ENCODE measurements at regions of chr16 and their contacts with region 1.

Region 1: DNA sequence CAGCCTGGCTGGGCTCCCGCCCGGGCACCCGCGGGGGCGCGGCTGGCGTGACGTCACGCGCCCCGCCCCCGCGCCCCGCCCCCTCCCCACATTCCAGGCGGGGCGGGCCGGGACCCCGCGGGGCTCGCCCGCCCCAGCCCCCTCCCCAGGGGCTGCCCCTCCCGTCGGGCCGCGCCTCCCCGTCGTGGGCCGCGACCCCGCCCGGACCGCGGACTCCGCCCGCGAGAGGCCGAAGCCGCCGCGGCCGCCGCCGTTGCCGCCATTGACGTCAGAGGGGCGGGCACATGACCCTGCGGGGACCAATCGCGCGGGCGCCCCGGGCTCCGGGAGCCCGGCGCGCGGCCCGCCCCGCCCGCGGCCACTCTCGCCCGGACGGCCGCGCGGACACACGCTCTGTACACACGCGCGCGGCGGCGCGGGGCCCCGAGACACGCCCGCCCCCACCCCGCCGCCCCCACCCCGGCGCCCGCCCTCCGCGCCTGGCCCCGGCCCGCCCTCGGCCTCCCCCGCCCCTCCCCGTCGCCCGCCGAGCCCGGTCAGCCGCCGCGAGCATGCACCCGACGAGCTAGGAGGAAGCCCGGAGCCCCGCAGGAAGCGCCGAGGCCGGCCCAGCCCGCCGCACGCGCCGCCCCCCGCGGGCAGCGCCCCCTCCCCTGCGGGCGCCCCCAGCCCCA is at the start of gene CMIP:
- DNase-seq: peak; percentile 67
- H3K4me3 Mint-ChIP-seq: peak within 1 kb of the TSS; percentile 99
- H3K27ac Mint-ChIP-seq: peak within 1 kb of the TSS; percentile 93
- H3K4me1 Mint-ChIP-seq: peaks cover 23% of the 10 kb centered on the region
- H3K27me3 Mint-ChIP-seq: no peaks in the 10 kb centered on the region
- CTCF ChIP-seq: no peak
- total RNA-seq, gene CMIP: 44.3 and 53.6 TPM in 2 replicates

Region 2: DNA sequence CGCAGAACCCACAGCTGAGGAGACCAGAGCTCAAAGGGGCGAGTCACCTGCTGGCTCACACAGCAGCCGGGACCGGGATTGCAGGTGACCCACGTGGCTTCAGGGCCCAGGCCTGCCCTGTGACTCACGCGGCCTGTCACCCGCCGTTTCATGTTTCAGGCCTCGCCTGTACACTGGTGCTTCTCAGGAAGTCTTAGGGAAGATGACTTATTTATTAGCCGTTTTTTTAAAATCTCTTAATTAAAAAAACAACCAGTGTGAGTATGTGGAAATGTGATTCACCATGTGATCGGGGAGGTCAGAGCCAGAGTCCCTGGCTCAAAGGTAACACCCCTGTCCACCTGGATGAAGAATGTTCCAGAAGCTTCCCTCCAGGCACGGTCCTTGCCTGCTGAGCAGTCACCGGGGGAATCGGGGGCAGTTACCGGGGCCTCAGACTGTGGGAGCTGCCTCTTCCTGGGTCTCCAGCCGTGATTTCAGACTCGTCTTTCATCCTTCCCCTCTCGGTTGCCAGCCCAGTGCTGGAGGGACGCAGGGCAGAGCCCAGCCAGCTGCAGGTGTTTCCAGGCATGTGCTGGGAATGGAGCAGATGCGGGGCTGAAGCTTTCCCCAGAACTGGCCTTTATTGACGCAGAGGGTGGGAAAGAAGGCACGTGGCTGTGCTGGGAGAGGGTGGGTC is 49.3 kb after region 1 on chr16:
- CTCF ChIA-PET with region 1: interaction called, 5 read pairs
- POLR2A ChIA-PET with region 1: interaction called, 20 read pairs
- intact Hi-C with region 1: loop called (anchors 2 kb)
- DNase-seq: peak; percentile 89
- H3K4me3 Mint-ChIP-seq: peak overlapping the region; percentile 14
- H3K27ac Mint-ChIP-seq: peak overlapping the region; percentile 89
- H3K4me1 Mint-ChIP-seq: peaks cover 43% of the 10 kb centered on the region
- H3K27me3 Mint-ChIP-seq: no peaks in the 10 kb centered on the region
- CTCF ChIP-seq: no peak

Region 3: GRCh38 chr16:81521151-81521626 is 76.6 kb after region 1 on chr16:
- CTCF ChIA-PET with region 1: no interaction called
- POLR2A ChIA-PET with region 1: interaction called, 60 read pairs
- intact Hi-C with region 1: loop called (anchors 2 kb)
- DNase-seq: no peak
- H3K4me3 Mint-ChIP-seq: no peak overlapping the region
- H3K27ac Mint-ChIP-seq: peak overlapping the region; percentile 57
- H3K4me1 Mint-ChIP-seq: peaks cover 33% of the 10 kb centered on the region
- H3K27me3 Mint-ChIP-seq: no peaks in the 10 kb centered on the region
- CTCF ChIP-seq: no peak

Region 4: DNA sequence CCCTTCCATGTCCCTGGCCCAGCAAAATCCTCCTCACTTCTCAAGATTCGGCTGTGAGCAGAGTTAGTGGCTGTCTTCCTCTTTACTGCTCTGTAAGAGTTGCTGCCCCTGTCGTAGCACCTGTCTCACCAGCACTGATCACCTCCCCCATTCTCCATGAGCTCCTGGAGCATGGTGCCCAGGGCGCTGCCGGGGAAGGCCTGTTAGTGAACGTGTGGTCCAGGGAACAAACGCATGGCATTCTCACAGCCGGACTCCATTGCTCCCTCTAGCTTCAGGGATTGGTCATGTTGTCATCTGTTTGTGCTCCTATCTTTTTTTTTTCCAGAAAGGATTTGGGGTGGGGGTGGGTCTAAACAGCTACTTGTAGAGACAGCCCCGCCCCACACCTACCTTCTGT is 141.2 kb after region 1 on chr16:
- CTCF ChIA-PET with region 1: no interaction called
- POLR2A ChIA-PET with region 1: interaction called, 7 read pairs
- intact Hi-C with region 1: loop called (anchors 1 kb)
- DNase-seq: peak; percentile 39
- H3K4me3 Mint-ChIP-seq: no peak overlapping the region
- H3K27ac Mint-ChIP-seq: peak overlapping the region; percentile 77
- H3K4me1 Mint-ChIP-seq: peaks cover 56% of the 10 kb centered on the region
- H3K27me3 Mint-ChIP-seq: no peaks in the 10 kb centered on the region
- CTCF ChIP-seq: no peak

Region 5: DNA sequence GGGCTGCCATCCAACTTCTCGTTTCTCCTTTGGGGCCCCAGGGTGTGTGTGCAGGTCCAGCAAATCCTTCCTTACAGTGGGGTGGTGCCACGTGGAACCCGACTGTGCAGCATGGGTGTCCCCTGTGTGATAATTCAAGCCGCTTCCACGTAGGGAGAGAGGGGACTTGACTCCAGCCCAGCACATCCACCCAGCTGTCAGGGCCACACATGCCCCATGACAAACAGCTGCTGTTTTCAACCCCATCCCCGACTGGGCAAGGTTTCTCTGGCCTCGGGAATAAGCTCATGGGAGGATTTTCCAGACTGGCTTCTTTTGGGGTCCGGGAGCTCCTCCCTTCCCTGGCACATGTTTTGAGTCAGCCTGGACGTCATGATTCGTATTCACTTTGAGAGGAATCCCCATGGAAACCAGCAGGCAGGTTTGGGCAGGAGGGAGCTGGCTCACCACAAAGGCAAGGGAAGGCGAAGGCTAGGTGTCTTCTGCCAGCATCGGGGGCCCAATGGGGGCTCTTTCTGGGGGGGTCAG is 156.4 kb after region 1 on chr16:
- CTCF ChIA-PET with region 1: no interaction called
- POLR2A ChIA-PET with region 1: interaction called, 9 read pairs
- intact Hi-C with region 1: loop called (anchors 5 kb)
- DNase-seq: peak; percentile 86
- H3K4me3 Mint-ChIP-seq: no peak overlapping the region
- H3K27ac Mint-ChIP-seq: peak overlapping the region; percentile 88
- H3K4me1 Mint-ChIP-seq: peaks cover 58% of the 10 kb centered on the region
- H3K27me3 Mint-ChIP-seq: no peaks in the 10 kb centered on the region
- CTCF ChIP-seq: no peak

Region 6: DNA sequence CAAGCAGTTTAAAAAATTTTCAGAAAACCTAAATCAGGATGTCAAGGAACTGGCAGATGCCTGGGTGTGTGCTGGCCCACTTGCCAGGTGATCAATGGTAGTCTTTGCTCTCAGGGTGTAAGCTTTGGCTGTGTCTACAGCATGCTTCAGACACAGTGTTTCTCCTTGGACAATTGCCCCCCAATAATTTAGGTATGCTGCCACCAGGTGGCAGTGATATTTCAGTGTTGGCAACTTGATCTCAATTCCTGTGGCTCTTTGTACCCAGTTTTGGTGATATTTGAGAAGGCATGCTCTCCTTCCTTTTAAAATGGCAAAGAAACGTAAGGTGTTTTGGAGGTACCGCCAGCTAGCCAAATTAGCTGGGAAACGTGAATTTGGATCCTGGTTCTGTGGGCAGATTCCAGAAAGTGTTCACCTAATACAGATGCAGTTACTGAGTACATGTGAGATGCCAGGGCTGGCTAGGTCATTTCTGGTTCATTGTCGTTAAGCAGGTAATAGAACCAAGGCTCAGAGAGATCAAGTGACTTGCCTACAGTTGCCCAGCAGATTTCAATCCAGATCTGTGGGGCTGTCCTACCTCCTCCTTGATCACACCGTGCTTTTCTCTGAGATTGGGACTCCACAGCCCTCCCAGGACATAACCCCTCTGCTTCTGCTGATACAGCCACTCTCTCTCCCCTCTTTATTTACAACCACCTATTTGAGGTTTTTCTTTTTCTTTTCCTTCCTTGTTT is 178.9 kb after region 1 on chr16:
- CTCF ChIA-PET with region 1: interaction called, 3 read pairs
- POLR2A ChIA-PET with region 1: interaction called, 11 read pairs
- intact Hi-C with region 1: no loop called
- DNase-seq: peak; percentile 73
- H3K4me3 Mint-ChIP-seq: no peak overlapping the region
- H3K27ac Mint-ChIP-seq: no peak overlapping the region
- H3K4me1 Mint-ChIP-seq: peaks cover 9% of the 10 kb centered on the region
- H3K27me3 Mint-ChIP-seq: no peaks in the 10 kb centered on the region
- CTCF ChIP-seq: peak; percentile 64

Region 7: DNA sequence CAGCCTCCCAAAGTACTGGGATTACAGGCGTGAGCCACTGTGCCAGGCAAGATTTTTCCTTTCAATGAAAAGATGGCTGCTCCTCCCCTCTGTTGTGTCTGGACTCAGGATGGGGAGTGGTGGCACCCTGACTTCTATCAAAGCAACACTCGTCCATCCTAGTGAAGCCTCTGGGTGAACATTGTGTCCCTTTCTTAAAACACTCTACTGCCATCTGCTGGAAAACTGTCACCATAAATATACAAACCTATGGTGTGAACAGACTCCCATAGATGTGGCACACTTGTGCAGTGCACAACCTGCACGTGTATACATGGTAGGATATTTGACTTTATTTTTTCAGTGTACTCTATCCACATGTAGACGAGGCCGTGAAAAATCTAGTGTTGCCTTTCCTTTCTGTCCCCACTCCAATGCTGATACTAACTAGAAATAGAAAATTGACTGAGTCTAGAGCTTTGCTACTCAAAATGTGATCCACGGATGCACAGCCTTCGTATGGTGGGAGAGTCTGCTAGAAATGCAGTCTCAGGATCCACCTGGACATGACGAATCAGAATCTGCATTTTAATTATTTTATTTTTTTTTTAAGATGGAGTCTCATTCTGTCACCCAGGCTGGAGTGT is 278.6 kb after region 1 on chr16:
- CTCF ChIA-PET with region 1: interaction called, 3 read pairs
- POLR2A ChIA-PET with region 1: no interaction called
- intact Hi-C with region 1: loop called (anchors 1 kb)
- DNase-seq: peak; percentile 86
- H3K4me3 Mint-ChIP-seq: no peak overlapping the region
- H3K27ac Mint-ChIP-seq: no peak overlapping the region
- H3K4me1 Mint-ChIP-seq: peaks cover 15% of the 10 kb centered on the region
- H3K27me3 Mint-ChIP-seq: no peaks in the 10 kb centered on the region
- CTCF ChIP-seq: peak; percentile 68